ENCODE measurements at regions of chr17 and their contacts with region 1.

Region 1: DNA sequence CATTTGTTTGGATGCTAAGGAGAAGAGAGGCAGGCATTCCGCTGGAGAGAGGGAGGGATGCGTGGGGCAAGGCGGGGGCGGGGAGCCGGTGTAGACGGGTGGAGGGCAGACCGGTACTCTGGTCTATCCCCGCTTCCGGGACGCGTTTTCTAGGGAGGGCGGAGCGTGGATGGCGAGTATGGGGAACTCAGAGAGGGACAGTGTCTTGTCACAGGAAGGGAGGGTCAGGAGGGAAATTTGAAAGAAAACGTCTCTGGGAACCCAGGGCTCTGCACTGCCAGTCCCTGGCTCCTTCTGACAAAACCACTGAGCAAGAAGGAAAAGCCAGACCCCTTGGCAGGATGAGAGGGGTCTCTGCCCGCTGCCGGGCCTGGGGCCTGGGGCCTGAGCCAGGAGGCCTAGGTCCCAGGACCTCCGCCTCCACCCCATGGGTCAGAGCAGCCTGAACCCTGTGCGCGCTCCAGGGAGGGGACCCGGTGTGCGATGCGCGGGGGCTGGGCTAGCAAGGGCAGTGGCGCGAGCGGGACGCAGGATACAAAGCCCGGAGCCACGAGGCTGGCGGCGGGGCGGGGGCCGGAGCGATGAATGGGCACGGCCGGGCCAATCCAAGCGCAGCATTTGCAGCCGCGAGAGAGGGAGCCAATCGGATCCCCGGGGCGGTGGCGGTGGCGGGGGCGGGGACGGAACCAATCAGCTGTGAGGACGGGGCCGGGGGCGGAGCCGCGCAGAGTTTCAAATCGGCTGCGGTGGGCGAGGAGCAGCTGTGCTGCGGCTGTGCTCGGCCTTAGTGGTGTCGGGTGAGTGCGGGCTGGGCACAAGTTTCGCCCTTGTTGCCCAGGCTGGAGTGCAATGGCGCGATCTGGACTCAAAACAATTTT is at the start of gene PIMREG:
- DNase-seq: peak; percentile 71
- ATAC-seq: peak; percentile 97
- H3K4me3 ChIP-seq: peak within 1 kb of the TSS; percentile 60 to 78
- H3K27ac ChIP-seq: peak within 1 kb of the TSS; percentile 98
- H3K4me1 ChIP-seq: peaks cover 7% of the 10 kb centered on the region
- H3K27me3 ChIP-seq: no peaks in the 10 kb centered on the region
- CTCF ChIP-seq: no peak
- total RNA-seq, gene PIMREG: 41.2 TPM

Region 2: GRCh38 chr17:5809580-5810188 is 634.2 kb before region 1 on chr17:
- CTCF ChIA-PET with region 1: no interaction called
- POLR2A ChIA-PET with region 1: interaction called, 11 read pairs
- in situ Hi-C with region 1: no loop called
- intact Hi-C with region 1: no loop called
- DNase-seq: no peak
- ATAC-seq: no peak
- H3K4me3 ChIP-seq: no peak overlapping the region
- H3K27ac ChIP-seq: no peak overlapping the region
- H3K4me1 ChIP-seq: no peaks in the 10 kb centered on the region
- H3K27me3 ChIP-seq: no peaks in the 10 kb centered on the region
- CTCF ChIP-seq: no peak

Region 3: GRCh38 chr17:6428207-6428965 is 15.5 kb before region 1 on chr17:
- CTCF ChIA-PET with region 1: no interaction called
- POLR2A ChIA-PET with region 1: interaction called, 12 read pairs
- in situ Hi-C with region 1: no loop called
- intact Hi-C with region 1: no loop called
- DNase-seq: no peak
- ATAC-seq: no peak
- H3K4me3 ChIP-seq: no peak overlapping the region
- H3K27ac ChIP-seq: no peak overlapping the region
- H3K4me1 ChIP-seq: no peaks in the 10 kb centered on the region
- H3K27me3 ChIP-seq: no peaks in the 10 kb centered on the region
- CTCF ChIP-seq: no peak

Region 4: GRCh38 chr17:6454957-6455705 is 11.2 kb after region 1 on chr17:
- CTCF ChIA-PET with region 1: no interaction called
- POLR2A ChIA-PET with region 1: no interaction called
- in situ Hi-C with region 1: no loop called
- intact Hi-C with region 1: no loop called
- DNase-seq: no peak
- ATAC-seq: no peak
- H3K4me3 ChIP-seq: no peak overlapping the region
- H3K27ac ChIP-seq: no peak overlapping the region
- H3K4me1 ChIP-seq: no peaks in the 10 kb centered on the region; the same call in 1 of the 2 replicates
- H3K27me3 ChIP-seq: no peaks in the 10 kb centered on the region
- CTCF ChIP-seq: no peak

Region 5: DNA sequence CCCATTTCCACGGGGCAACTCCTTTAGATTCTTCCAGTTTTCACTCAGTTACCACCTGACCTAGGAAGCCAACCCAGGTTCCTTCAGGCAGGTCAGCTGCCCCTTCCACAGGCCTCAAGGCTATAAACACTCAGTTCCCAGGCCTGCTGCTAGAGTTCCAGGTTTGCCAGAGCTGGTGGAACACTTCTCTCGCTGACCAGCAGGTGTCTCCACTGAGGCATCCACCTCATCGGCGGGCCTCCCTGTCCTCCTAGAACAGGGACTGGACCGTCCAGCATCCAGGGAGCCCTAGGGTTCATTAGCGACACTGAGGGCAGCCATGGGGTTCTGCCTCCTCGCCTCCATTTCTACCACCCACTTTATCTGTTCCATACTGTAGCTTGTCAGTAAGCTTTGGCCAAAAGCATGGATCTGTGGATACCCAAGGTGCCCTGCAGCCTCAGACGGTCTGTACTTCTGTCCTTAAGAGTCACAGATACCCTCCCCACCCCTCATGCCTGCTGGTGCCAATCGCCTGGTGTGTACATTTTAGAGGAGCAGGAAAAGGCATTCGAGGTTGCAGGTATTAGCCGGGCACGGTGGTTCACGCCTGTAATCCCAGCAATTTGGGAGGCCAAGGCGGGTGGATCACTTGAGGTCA is 29.3 kb after region 1 on chr17:
- CTCF ChIA-PET with region 1: no interaction called
- POLR2A ChIA-PET with region 1: interaction called, 10 read pairs
- in situ Hi-C with region 1: no loop called
- intact Hi-C with region 1: no loop called
- DNase-seq: peak; percentile 71
- ATAC-seq: peak; percentile 82
- H3K4me3 ChIP-seq: no peak overlapping the region
- H3K27ac ChIP-seq: no peak overlapping the region
- H3K4me1 ChIP-seq: peaks cover 3% of the 10 kb centered on the region; the same call in 1 of the 2 replicates
- H3K27me3 ChIP-seq: no peaks in the 10 kb centered on the region; the same call in 1 of the 2 replicates
- CTCF ChIP-seq: peak; percentile 95